Breast epithelium (tissue), 4 donors: ENCODE measurements at regions of chr5 and their contacts with region 1.

Region 1: GRCh38 chr5:8288334-8288733 is 419.4 kb downstream of the MTRR start:
- DNase-seq: no peak
- H3K4me3 ChIP-seq: no peak overlapping the region
- H3K27ac ChIP-seq: no peak overlapping the region
- H3K4me1 ChIP-seq: no peaks in the 10 kb centered on the region
- H3K27me3 ChIP-seq: no peaks in the 10 kb centered on the region
- CTCF ChIP-seq: no peak
- POLR2A ChIP-seq: no peak

Region 2: GRCh38 chr5:6592601-6593000 is 1695.7 kb before region 1 on chr5:
- intact Hi-C with region 1: no loop called
- DNase-seq: no peak
- H3K4me3 ChIP-seq: no peak overlapping the region
- H3K27ac ChIP-seq: no peak overlapping the region
- H3K4me1 ChIP-seq: no peaks in the 10 kb centered on the region
- H3K27me3 ChIP-seq: no peaks in the 10 kb centered on the region
- CTCF ChIP-seq: no peak
- POLR2A ChIP-seq: no peak

Region 3: GRCh38 chr5:8254674-8255073 is 33.7 kb before region 1 on chr5:
- intact Hi-C with region 1: no loop called
- DNase-seq: no peak
- H3K4me3 ChIP-seq: no peak overlapping the region
- H3K27ac ChIP-seq: no peak overlapping the region
- H3K4me1 ChIP-seq: no peaks in the 10 kb centered on the region
- H3K27me3 ChIP-seq: no peaks in the 10 kb centered on the region
- CTCF ChIP-seq: no peak
- POLR2A ChIP-seq: no peak

Region 4: GRCh38 chr5:8299716-8300115 is 11.4 kb after region 1 on chr5:
- intact Hi-C with region 1: no loop called
- DNase-seq: no peak
- H3K4me3 ChIP-seq: no peak overlapping the region
- H3K27ac ChIP-seq: no peak overlapping the region
- H3K4me1 ChIP-seq: no peaks in the 10 kb centered on the region
- H3K27me3 ChIP-seq: no peaks in the 10 kb centered on the region
- CTCF ChIP-seq: no peak
- POLR2A ChIP-seq: no peak

Region 5: GRCh38 chr5:8340739-8341344 is 52.5 kb after region 1 on chr5:
- intact Hi-C with region 1: loop called (anchors 2 kb)
- DNase-seq: no peak
- H3K4me3 ChIP-seq: no peak overlapping the region
- H3K27ac ChIP-seq: no peak overlapping the region
- H3K4me1 ChIP-seq: no peaks in the 10 kb centered on the region
- H3K27me3 ChIP-seq: no peaks in the 10 kb centered on the region
- CTCF ChIP-seq: peak in 1 of 3 donors; percentile 10
- POLR2A ChIP-seq: no peak

Region 6: GRCh38 chr5:9617221-9617620 is 1328.9 kb after region 1 on chr5:
- intact Hi-C with region 1: loop called (anchors 10 kb)
- DNase-seq: no peak
- H3K4me3 ChIP-seq: no peak overlapping the region
- H3K27ac ChIP-seq: no peak overlapping the region
- H3K4me1 ChIP-seq: no peaks in the 10 kb centered on the region
- H3K27me3 ChIP-seq: no peaks in the 10 kb centered on the region
- CTCF ChIP-seq: no peak
- POLR2A ChIP-seq: no peak

Region 7: DNA sequence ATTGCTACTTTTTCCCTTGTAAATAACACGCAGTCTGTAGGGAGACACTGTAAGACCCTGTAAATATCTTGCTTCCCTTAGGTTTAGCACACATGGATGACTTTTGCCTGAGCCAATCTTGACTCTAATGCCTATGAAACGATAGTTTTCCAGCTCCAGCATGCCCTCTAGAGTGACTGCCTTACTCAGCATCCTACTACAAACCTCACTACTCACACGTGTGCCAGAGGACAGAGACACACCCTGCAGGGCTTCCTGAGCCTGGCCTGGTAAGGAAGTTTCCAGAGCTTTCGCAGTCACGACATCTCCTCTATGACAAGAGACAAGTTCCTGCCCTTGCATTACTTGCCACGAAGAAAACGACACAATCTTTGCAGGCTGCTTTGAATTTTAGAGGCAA is 1823.2 kb after region 1 on chr5:
- intact Hi-C with region 1: loop called (anchors 10 kb)
- DNase-seq: no peak
- H3K4me3 ChIP-seq: no peak overlapping the region
- H3K27ac ChIP-seq: no peak overlapping the region
- H3K4me1 ChIP-seq: no peaks in the 10 kb centered on the region
- H3K27me3 ChIP-seq: no peaks in the 10 kb centered on the region
- CTCF ChIP-seq: no peak
- POLR2A ChIP-seq: no peak